Endothelial cell of umbilical vein (primary cell): ENCODE measurements at regions of chr10 and their contacts with region 1.

Region 1: GRCh38 chr10:99958302-99958701 is 51.4 kb downstream of the DNMBP start:
- DNase-seq: peak; percentile 95
- H3K4me3 ChIP-seq: peak overlapping the region in 1 of 3 experiments; percentile 19
- H3K27ac ChIP-seq: peak overlapping the region; percentile 50
- H3K4me1 ChIP-seq: peaks cover 31% of the 10 kb centered on the region
- H3K27me3 ChIP-seq: no peaks in the 10 kb centered on the region
- CTCF ChIP-seq: no peak
- POLR2A ChIP-seq: peak; percentile 73

Region 2: DNA sequence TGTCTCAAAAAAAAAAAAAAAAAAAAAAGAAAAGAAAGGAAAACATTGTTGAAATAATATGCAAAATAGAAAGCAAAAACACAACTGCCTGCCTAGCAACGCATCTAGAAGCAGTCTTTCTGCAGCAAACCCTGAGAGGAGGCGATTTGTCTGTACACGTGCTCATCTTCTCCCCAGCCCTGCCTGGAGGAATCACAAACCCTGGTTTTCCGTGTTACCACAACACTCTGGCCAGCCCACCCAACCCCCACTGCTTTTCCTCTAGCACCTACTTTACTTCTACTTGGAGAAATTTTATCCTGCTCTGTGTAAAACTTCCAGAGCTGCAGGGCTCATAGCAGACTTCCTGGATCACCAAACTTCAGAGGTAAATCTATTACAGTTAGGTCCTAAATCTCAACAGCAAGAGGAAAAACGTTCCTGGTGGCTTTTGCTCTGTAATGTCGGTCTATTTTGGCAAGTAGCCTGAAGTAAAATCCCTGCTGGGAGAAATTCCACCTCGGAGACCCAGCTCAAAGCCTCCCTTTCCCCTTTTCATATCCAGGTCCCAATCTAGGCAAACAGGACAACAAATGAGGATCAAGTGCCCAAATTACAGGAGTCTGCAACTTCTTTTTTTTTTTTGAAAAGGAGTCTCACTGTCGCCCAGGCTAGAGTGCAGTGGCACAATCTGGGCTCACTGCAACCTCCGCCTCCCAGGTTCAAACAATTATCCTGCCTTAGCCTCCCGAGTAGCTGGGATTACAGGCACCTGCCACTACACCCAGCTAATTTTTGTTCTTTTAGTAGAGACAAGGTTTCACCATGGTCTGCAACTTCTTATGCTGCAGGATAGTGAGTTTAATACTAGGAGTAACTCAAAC is 40.1 kb before region 1 on chr10:
- CTCF ChIA-PET with region 1: no interaction called
- POLR2A ChIA-PET with region 1: no interaction called
- dilution Hi-C with region 1: no loop called
- intact Hi-C with region 1: loop called (anchors 5 kb)
- DNase-seq: peak; percentile 90
- H3K4me3 ChIP-seq: peak overlapping the region in 1 of 3 experiments; percentile 10
- H3K27ac ChIP-seq: peak overlapping the region; percentile 67
- H3K4me1 ChIP-seq: peaks cover 66% of the 10 kb centered on the region
- H3K27me3 ChIP-seq: no peaks in the 10 kb centered on the region
- CTCF ChIP-seq: no peak
- POLR2A ChIP-seq: no peak

Region 3: DNA sequence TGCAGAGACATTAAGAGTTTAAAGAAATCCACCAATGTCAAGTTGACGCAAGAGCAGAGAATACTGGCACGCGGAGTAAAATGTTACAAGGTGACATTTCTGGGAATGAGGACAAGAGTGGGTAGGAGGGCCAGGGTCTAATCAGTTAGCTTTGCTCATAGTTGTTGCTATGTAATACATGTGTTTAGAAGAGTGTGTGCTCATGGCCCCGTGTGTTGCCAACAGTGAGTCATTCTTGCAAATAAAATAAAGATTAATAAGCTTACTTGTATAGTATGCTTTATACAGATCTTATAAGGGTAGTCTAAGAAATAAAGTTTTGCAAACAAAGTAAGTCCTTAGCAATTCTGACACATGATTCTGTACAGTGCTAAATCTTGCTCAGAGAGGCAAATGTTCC is 13.0 kb before region 1 on chr10:
- CTCF ChIA-PET with region 1: interaction called, 3 read pairs
- POLR2A ChIA-PET with region 1: no interaction called
- dilution Hi-C with region 1: no loop called
- intact Hi-C with region 1: loop called (anchors 1 kb)
- DNase-seq: peak; percentile 88
- H3K4me3 ChIP-seq: no peak overlapping the region
- H3K27ac ChIP-seq: peak overlapping the region; percentile 69
- H3K4me1 ChIP-seq: peaks cover 65% of the 10 kb centered on the region
- H3K27me3 ChIP-seq: no peaks in the 10 kb centered on the region
- CTCF ChIP-seq: no peak
- POLR2A ChIP-seq: no peak